OCI-LY7 (cell line): ENCODE measurements at regions of chr9 and their contacts with region 1.

Region 1: DNA sequence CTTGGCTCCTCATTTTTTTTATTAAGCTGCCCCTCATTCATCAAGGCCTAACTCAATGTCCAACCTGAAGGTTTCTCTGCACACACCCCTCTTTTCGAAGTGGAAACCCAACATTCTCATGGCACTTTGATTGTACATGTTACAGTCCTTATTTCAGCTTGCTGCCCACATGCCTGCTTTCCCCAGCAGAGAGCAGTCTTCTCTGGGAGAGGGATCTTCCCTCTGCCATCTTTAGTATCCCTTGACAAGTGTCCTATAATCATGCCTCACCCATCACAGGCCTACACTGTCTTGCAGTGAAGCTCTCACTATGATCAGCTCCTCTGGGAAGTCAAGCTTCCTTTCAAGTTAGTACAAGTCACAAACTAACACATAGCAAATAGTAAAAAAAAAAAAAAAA is 175.1 kb downstream of the ACER2 start:
- DNase-seq: no peak
- H3K4me3 ChIP-seq: no peak overlapping the region
- H3K27ac ChIP-seq: no peak overlapping the region
- H3K4me1 ChIP-seq: no peaks in the 10 kb centered on the region
- CTCF ChIP-seq: no peak

Region 2: DNA sequence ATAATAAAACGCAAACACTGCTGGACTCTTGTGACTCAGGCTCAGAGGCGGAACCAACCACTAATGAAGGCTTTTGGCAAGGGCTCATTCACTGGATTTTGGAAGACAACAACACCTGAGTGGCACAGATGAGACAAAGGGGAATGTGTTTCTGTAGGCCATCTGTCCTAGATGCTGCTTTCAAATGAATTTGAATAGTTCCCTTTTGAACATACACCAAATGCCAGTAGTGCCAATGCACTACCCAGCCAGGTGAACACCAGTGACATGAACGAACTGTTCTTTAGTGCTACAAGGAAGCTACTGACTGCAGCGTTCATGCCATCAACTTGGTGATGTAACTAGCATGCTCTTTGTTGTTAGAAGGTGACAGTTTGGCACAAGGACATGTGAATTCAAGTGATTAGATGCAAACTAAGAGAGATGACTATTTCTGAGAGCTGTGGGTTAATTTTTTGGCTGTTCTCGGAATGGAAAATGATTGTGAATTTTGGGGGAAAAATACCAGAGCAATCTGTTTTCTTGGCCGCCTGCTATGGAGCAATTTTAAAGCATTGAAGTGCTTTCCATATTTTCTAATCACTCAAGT is 31.2 kb after region 1 on chr9:
- CTCF ChIA-PET with region 1: no interaction called
- POLR2A ChIA-PET with region 1: no interaction called
- intact Hi-C with region 1: no loop called
- DNase-seq: no peak
- H3K4me3 ChIP-seq: no peak overlapping the region
- H3K27ac ChIP-seq: no peak overlapping the region
- H3K4me1 ChIP-seq: no peaks in the 10 kb centered on the region
- CTCF ChIP-seq: no peak

Region 3: DNA sequence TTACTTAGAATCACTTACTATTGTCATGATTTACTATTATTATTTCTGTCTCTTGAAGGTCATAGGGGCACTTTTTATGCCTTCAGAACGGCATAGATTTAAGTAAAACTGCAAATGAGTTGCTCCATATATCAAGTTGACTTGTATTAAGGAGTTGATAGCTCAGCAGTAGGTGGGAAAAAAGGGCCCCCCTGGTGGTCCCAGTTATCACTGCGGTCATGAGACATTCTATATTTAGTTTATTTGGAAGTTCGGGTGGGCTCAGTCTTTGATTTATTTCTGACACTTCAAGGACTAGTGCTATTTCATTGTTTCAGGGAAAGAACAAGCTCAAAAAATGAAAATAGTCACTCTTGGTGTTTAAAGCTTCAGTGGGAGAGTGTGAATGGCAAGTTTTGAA is 45.6 kb after region 1 on chr9:
- CTCF ChIA-PET with region 1: no interaction called
- POLR2A ChIA-PET with region 1: interaction called, 11 read pairs
- intact Hi-C with region 1: no loop called
- DNase-seq: no peak
- H3K4me3 ChIP-seq: no peak overlapping the region
- H3K27ac ChIP-seq: no peak overlapping the region
- H3K4me1 ChIP-seq: no peaks in the 10 kb centered on the region
- CTCF ChIP-seq: no peak